ENCODE measurements at regions of chr4 and their contacts with region 1.

Region 1: GRCh38 chr4:78667764-78668163 is 108.4 kb upstream of the BMP2K start:
- H3K4me3 Mint-ChIP-seq: no peak overlapping the region
- H3K27ac Mint-ChIP-seq: peak overlapping the region; percentile 87
- H3K4me1 Mint-ChIP-seq: peaks cover 71% of the 10 kb centered on the region
- H3K27me3 Mint-ChIP-seq: no peaks in the 10 kb centered on the region

Region 2: DNA sequence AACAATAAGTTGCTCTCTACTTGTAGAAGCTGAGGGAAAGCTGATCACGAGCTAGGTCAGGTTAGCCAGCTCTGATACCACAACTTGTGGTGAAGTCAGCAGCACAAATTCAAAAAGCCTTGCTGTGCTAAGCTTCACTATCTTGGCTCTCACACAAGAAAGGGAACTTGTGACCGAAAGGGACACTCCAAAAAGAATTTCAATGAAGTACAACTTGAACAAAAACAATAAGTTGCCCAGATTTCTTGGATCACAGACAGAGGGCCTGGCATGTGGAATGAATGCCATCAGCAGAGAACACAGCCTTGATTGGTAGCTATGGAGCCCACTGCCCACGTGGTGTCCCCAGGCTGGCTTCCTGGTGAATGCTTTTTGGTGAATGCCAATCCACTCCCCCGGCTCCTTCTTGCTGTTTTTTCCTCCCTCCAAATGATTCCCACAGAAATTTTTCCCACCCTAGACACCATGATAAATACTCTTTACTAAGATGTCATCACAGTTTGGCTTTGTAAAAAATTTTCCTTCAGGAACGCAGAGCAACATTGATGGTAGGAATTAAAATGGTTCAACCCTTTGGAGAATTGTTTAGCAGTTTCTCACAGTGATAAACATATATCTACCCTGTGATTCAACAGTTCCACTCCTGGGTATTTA is 33.6 kb before region 1 on chr4:
- intact Hi-C with region 1: loop called (anchors 5 kb)
- H3K4me3 Mint-ChIP-seq: no peak overlapping the region
- H3K27ac Mint-ChIP-seq: peak overlapping the region; percentile 88
- H3K4me1 Mint-ChIP-seq: peaks cover 75% of the 10 kb centered on the region
- H3K27me3 Mint-ChIP-seq: no peaks in the 10 kb centered on the region

Region 3: DNA sequence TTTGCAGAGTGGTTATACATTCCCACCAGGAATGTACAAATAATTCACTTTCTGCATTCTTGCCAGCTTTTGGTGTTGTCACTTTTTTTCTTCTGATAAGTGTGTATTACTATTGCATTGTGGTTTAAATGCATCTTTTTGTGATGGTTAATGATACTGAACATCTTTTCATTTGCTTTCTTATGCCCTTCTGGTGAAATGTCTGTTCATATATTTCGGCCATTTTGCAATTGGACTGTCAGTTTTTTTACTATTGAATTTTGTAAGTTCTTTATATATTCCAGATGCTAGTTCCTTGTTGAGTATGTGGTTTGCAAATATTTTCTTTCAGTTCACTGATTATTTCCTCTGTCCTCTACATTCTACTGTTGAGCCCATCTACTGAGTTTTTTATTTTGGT is 89.0 kb after region 1 on chr4:
- intact Hi-C with region 1: no loop called
- H3K4me3 Mint-ChIP-seq: no peak overlapping the region
- H3K27ac Mint-ChIP-seq: peak overlapping the region; percentile 34
- H3K4me1 Mint-ChIP-seq: peaks cover 31% of the 10 kb centered on the region
- H3K27me3 Mint-ChIP-seq: no peaks in the 10 kb centered on the region

Measured in dendritic cell treated with granulocyte-macrophage colony-stimulating factor and Interleukin-4, amounts not matched to agents 40 ng/mL and 50 ng/mL, for 4 days (primary cell).